K562 (cell line): ENCODE measurements at regions of chr3 and their contacts with region 1.

Region 1: DNA sequence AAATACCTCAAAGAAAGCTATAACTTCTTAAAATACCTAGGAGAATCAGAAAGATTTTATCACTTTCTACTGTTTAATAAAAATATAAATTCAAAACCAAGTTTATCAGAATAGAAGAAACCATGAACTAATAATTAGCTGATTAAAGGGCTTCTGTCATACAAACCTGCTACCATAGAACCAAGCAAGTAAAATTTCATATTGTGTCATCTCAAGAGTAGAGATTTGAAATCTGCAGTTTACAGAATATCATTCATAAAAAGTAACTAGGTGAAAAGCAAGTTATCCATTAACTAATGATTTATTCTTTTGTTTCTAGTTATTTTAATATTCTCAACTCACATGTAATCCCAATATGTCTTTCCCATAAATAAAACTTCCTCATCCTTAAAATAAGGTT is 36.8 kb upstream of the XXYLT1 start:
- DNase-seq: no peak
- ATAC-seq: no peak
- H3K4me3 ChIP-seq: no peak overlapping the region
- H3K27ac ChIP-seq: no peak overlapping the region
- H3K4me1 ChIP-seq: no peaks in the 10 kb centered on the region
- H3K27me3 ChIP-seq: no peaks in the 10 kb centered on the region
- CTCF ChIP-seq: no peak
- EP300 ChIP-seq: no peak
- POLR2A ChIP-seq: no peak
- RAD21 ChIP-seq: no peak

Region 2: GRCh38 chr3:195384952-195385351 is 77.2 kb after region 1 on chr3:
- CTCF ChIA-PET with region 1: no interaction called
- POLR2A ChIA-PET with region 1: interaction called, 3 read pairs
- in situ Hi-C with region 1: no loop called
- intact Hi-C with region 1: loop called (anchors 5 kb)
- DNase-seq: no peak
- ATAC-seq: no peak
- H3K4me3 ChIP-seq: no peak overlapping the region
- H3K27ac ChIP-seq: no peak overlapping the region
- H3K4me1 ChIP-seq: no peaks in the 10 kb centered on the region
- H3K27me3 ChIP-seq: no peaks in the 10 kb centered on the region
- CTCF ChIP-seq: no peak
- EP300 ChIP-seq: no peak
- POLR2A ChIP-seq: no peak
- RAD21 ChIP-seq: no peak